ENCODE measurements at regions of chr5 and their contacts with region 1.

Region 1: GRCh38 chr5:54249210-54250028 is 61.0 kb downstream of the ARL15 start:
- DNase-seq: no peak

Region 2: GRCh38 chr5:54344653-54345052 is 95.2 kb after region 1 on chr5:
- intact Hi-C with region 1: no loop called
- DNase-seq: no peak

Region 3: GRCh38 chr5:54492178-54492577 is 242.8 kb after region 1 on chr5:
- intact Hi-C with region 1: loop called in 1 of 2 experiments (anchors 10 kb)
- DNase-seq: no peak